Mammary epithelial cell (primary cell): ENCODE measurements at regions of chr12 and their contacts with region 1.

Region 1: DNA sequence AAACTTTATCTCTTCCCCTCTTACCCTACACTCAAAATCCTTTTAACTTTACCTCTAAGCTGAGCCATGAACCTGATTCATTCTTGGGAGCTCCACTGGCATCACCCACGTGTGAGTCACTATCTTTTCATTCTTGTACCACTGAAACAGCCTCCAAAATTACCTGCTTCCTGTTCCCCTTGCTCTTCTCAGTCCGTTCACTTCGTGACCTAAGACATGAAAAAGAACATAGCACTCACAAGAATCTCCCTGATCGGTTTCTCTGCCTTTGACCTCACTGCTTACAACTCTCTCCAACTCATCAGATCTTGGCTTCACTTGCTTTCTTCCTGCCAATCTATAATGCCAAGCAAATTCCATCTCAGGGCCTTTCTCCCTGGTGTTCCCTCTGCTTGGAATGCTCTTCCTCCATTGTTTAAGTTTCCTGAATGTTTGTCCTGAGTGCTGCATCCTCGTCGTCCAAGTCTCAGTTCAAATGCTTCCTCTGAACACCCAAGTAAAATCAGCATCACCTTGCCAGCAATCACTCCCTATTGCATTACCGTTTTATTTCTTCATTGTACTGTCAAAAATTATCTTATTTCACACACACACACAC is 9.2 kb downstream of the GLIPR1 start:
- DNase-seq: peak; percentile 76
- H3K4me3 ChIP-seq: no peak overlapping the region
- H3K27ac ChIP-seq: peak overlapping the region; percentile 26
- H3K4me1 ChIP-seq: peaks cover 23% of the 10 kb centered on the region
- H3K27me3 ChIP-seq: no peaks in the 10 kb centered on the region
- CTCF ChIP-seq: no peak

Region 2: GRCh38 chr12:75155969-75156637 is 333.6 kb before region 1 on chr12:
- CTCF ChIA-PET with region 1: no interaction called
- dilution Hi-C with region 1: no loop called
- in situ Hi-C with region 1: no loop called
- intact Hi-C with region 1: loop called (anchors 5 kb)
- DNase-seq: no peak
- H3K4me3 ChIP-seq: no peak overlapping the region
- H3K27ac ChIP-seq: no peak overlapping the region
- H3K4me1 ChIP-seq: no peaks in the 10 kb centered on the region
- H3K27me3 ChIP-seq: peaks cover 1% of the 10 kb centered on the region
- CTCF ChIP-seq: no peak

Region 3: GRCh38 chr12:75270157-75270556 is 219.6 kb before region 1 on chr12:
- CTCF ChIA-PET with region 1: no interaction called
- dilution Hi-C with region 1: no loop called
- in situ Hi-C with region 1: no loop called
- intact Hi-C with region 1: no loop called
- DNase-seq: no peak
- H3K4me3 ChIP-seq: no peak overlapping the region
- H3K27ac ChIP-seq: no peak overlapping the region
- H3K4me1 ChIP-seq: no peaks in the 10 kb centered on the region
- H3K27me3 ChIP-seq: no peaks in the 10 kb centered on the region
- CTCF ChIP-seq: no peak

Region 4: DNA sequence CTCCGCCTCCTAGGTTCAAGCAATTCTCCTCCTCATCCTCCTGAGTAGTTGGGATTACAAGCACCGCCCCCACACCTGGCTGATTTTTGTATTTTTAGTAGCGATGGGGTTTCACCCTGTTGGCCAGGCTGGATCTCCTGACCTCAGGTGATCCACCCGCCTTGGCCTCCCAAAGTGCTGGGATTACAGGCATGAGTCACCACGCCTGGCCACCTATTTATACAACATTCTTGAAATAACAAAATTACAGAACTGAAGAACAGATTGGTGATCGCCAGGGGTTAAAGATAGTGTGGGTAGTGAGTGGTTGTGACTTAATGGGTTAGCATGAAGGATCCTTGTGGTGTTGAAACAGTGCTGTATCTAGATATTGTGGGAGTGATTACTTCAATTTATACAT is 147.9 kb before region 1 on chr12:
- CTCF ChIA-PET with region 1: interaction called, 13 read pairs
- dilution Hi-C with region 1: no loop called
- in situ Hi-C with region 1: loop called in 1 of 2 experiments (anchors 10 kb)
- intact Hi-C with region 1: no loop called
- DNase-seq: no peak
- H3K4me3 ChIP-seq: no peak overlapping the region
- H3K27ac ChIP-seq: no peak overlapping the region
- H3K4me1 ChIP-seq: no peaks in the 10 kb centered on the region
- H3K27me3 ChIP-seq: no peaks in the 10 kb centered on the region
- CTCF ChIP-seq: no peak

Region 5: GRCh38 chr12:75437564-75437963 is 52.1 kb before region 1 on chr12:
- CTCF ChIA-PET with region 1: interaction called, 5 read pairs
- dilution Hi-C with region 1: no loop called
- in situ Hi-C with region 1: no loop called
- intact Hi-C with region 1: loop called (anchors 2 kb)
- DNase-seq: peak; percentile 53
- H3K4me3 ChIP-seq: no peak overlapping the region
- H3K27ac ChIP-seq: no peak overlapping the region
- H3K4me1 ChIP-seq: peaks cover 19% of the 10 kb centered on the region
- H3K27me3 ChIP-seq: no peaks in the 10 kb centered on the region
- CTCF ChIP-seq: peak; percentile 30 to 52